Left ventricle myocardium inferior (tissue), 1 donor: ENCODE measurements at regions of chr10 and their contacts with region 1.

Region 1: GRCh38 chr10:101889256-101890210 is 45.9 kb upstream of the KCNIP2 start:
- DNase-seq: peak; percentile 73
- H3K4me3 ChIP-seq: no peak overlapping the region
- H3K27ac ChIP-seq: peak overlapping the region; percentile 83
- H3K4me1 ChIP-seq: peaks cover 48% of the 10 kb centered on the region
- H3K27me3 ChIP-seq: no peaks in the 10 kb centered on the region
- CTCF ChIP-seq: peak; percentile 83

Region 2: GRCh38 chr10:101749047-101750016 is 140.2 kb before region 1 on chr10:
- intact Hi-C with region 1: no loop called
- DNase-seq: no peak
- H3K4me3 ChIP-seq: no peak overlapping the region
- H3K27ac ChIP-seq: no peak overlapping the region
- H3K4me1 ChIP-seq: no peaks in the 10 kb centered on the region
- H3K27me3 ChIP-seq: peaks cover 28% of the 10 kb centered on the region
- CTCF ChIP-seq: no peak

Region 3: DNA sequence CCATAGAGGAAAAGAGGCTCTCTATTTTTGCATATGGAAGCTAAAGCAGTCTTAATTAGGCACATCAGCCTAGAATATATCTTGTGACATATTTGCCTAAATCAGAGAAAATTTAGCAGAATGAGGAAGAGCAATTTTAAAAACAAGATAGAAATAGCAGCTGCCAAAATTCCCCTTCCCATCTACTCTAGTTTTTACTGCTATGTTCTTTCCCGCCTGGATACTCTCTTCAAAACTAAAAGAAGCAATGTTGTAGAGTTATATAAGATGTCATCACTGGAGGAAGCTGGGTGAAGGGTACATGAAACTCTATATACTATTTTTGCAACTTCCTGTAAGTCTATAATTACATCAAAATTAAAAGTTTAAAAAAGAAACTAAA is 79.4 kb after region 1 on chr10:
- intact Hi-C with region 1: loop called (anchors 5 kb)
- DNase-seq: no peak
- H3K4me3 ChIP-seq: no peak overlapping the region
- H3K27ac ChIP-seq: peak overlapping the region; percentile 90
- H3K4me1 ChIP-seq: peaks cover 78% of the 10 kb centered on the region
- H3K27me3 ChIP-seq: no peaks in the 10 kb centered on the region
- CTCF ChIP-seq: no peak